B cell (primary cell): ENCODE measurements at regions of chr17 and their contacts with region 1.

Region 1: DNA sequence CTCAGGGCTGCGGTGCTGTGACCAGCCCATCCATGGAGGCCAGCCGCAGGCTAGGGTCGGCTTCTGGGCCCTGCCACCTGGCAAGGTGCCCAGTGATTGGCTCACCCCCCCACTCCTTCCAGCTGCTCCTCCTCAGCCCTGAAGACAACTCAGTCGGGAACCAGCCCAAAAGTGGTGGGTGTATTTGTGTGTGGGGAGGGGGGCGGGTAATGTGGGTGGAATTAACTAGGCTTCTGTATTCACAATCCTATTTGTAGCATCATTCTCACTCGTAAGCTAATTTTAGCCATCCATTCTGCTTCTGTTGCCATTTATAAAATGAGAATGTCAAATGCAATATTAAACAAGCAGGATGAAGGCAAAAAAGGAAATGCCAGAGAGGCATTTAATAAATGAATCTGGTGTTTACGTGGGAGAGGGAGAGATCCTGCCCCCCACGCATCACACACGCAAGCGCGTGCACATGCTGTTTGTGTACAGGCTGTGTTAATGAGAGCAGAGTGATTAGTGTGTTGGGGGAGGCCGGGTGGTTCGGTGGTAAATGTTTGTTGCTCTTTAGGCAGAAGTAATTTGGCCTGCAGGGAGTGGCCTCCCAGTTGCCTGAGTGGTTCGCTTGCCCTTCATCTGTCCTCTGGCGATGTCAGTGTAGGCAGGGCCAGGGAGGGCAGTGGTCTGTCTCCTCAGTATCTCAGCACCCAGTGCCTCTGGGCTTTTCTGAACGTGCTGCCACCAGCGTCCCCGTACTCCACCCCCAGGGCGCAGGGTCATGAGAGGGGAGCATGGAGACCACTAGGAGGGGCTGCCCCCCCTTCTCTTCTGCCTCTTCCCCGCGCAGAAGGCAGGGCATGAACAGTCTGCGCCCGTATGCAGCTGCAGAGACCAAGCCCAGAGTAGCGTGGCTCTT is 140.1 kb downstream of the CCDC182 start:
- DNase-seq: peak; percentile 88
- ATAC-seq: peak; percentile 77
- H3K4me3 ChIP-seq: peak overlapping the region in 1 of 5 experiments; percentile 42
- H3K4me3 Mint-ChIP-seq: peak overlapping the region; percentile 79
- H3K27ac ChIP-seq: peak overlapping the region; percentile 73 to 78
- H3K27ac Mint-ChIP-seq: peak overlapping the region; percentile 96
- H3K4me1 ChIP-seq: peaks cover 44 to 60% of the 10 kb centered on the region in 2 donors
- H3K4me1 Mint-ChIP-seq: peaks cover 62% of the 10 kb centered on the region
- H3K27me3 ChIP-seq: no peaks in the 10 kb centered on the region
- H3K27me3 Mint-ChIP-seq: no peaks in the 10 kb centered on the region
- CTCF ChIP-seq: peak; percentile 41

Region 2: GRCh38 chr17:57584050-57584551 is 20.9 kb before region 1 on chr17:
- CTCF ChIA-PET with region 1: no interaction called
- POLR2A ChIA-PET with region 1: no interaction called
- intact Hi-C with region 1: no loop called
- DNase-seq: no peak
- ATAC-seq: no peak
- H3K4me3 ChIP-seq: no peak overlapping the region
- H3K4me3 Mint-ChIP-seq: no peak overlapping the region
- H3K27ac ChIP-seq: no peak overlapping the region
- H3K27ac Mint-ChIP-seq: no peak overlapping the region
- H3K4me1 ChIP-seq: no peaks in the 10 kb centered on the region
- H3K4me1 Mint-ChIP-seq: no peaks in the 10 kb centered on the region
- H3K27me3 ChIP-seq: no peaks in the 10 kb centered on the region
- H3K27me3 Mint-ChIP-seq: no peaks in the 10 kb centered on the region
- CTCF ChIP-seq: no peak

Region 3: GRCh38 chr17:57622683-57623433 is 17.8 kb after region 1 on chr17:
- CTCF ChIA-PET with region 1: interaction called, 40 read pairs
- POLR2A ChIA-PET with region 1: interaction called, 6 read pairs
- intact Hi-C with region 1: loop called (anchors 1 kb)
- DNase-seq: peak; percentile 73
- ATAC-seq: peak; percentile 78
- H3K4me3 ChIP-seq: peak overlapping the region in 4 of 5 experiments; percentile 32 to 64 (median 49)
- H3K4me3 Mint-ChIP-seq: peak overlapping the region; percentile 81
- H3K27ac ChIP-seq: peak overlapping the region; percentile 59 to 73
- H3K27ac Mint-ChIP-seq: peak overlapping the region; percentile 85
- H3K4me1 ChIP-seq: peaks cover 34 to 42% of the 10 kb centered on the region in 2 donors
- H3K4me1 Mint-ChIP-seq: peaks cover 45% of the 10 kb centered on the region
- H3K27me3 ChIP-seq: no peaks in the 10 kb centered on the region
- H3K27me3 Mint-ChIP-seq: no peaks in the 10 kb centered on the region
- CTCF ChIP-seq: no peak

Region 4: GRCh38 chr17:57629470-57629869 is 24.4 kb after region 1 on chr17:
- CTCF ChIA-PET with region 1: interaction called, 40 read pairs
- POLR2A ChIA-PET with region 1: interaction called, 5 read pairs
- intact Hi-C with region 1: loop called (anchors 1 kb)
- DNase-seq: peak; percentile 84
- ATAC-seq: peak; percentile 88
- H3K4me3 ChIP-seq: no peak overlapping the region
- H3K4me3 Mint-ChIP-seq: peak overlapping the region; percentile 71
- H3K27ac ChIP-seq: peak overlapping the region; percentile 63 to 66
- H3K27ac Mint-ChIP-seq: peak overlapping the region; percentile 92
- H3K4me1 ChIP-seq: peaks cover 37 to 52% of the 10 kb centered on the region in 2 donors
- H3K4me1 Mint-ChIP-seq: peaks cover 50% of the 10 kb centered on the region
- H3K27me3 ChIP-seq: no peaks in the 10 kb centered on the region
- H3K27me3 Mint-ChIP-seq: no peaks in the 10 kb centered on the region
- CTCF ChIP-seq: no peak

Region 5: DNA sequence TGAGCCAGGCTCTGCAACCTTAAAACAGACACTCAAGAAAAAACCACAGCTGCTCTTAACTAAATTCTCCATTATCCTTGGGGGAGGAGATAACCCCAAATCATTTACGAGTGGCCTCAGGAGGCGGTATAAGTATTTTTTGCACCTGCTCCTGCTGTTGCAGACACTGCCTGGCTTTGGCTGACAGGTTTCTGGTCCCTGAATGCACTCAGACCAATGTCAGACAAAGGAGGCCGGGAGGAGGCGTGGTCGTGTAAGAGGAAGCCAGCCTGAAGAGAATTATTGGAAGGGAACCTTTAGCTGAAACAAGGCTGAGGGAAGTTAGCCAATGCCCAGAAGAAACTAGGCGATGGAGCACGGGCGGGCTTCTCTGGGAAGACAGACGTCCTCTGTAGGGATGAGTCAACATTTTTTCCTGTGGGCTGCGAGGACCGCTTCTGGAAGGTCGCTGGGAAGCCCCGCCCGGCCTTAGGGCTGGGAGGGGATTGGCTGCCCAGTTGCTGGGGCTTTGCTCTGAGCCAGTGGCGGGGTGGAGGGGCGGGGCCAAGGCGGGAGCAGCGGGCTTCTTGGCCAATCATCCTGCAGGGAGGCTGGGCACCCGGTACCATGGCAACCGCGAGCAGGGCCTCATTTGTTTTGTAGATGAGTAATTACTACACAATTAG is 57.8 kb after region 1 on chr17:
- CTCF ChIA-PET with region 1: interaction called, 12 read pairs
- POLR2A ChIA-PET with region 1: no interaction called
- intact Hi-C with region 1: no loop called
- DNase-seq: peak; percentile 57
- ATAC-seq: peak; percentile 76
- H3K4me3 ChIP-seq: no peak overlapping the region
- H3K4me3 Mint-ChIP-seq: peak overlapping the region; percentile 72
- H3K27ac ChIP-seq: no peak overlapping the region
- H3K27ac Mint-ChIP-seq: peak overlapping the region; percentile 85
- H3K4me1 ChIP-seq: peaks cover 24 to 37% of the 10 kb centered on the region in 2 donors
- H3K4me1 Mint-ChIP-seq: peaks cover 35% of the 10 kb centered on the region
- H3K27me3 ChIP-seq: no peaks in the 10 kb centered on the region
- H3K27me3 Mint-ChIP-seq: no peaks in the 10 kb centered on the region
- CTCF ChIP-seq: no peak

Region 6: GRCh38 chr17:57739402-57740392 is 134.7 kb after region 1 on chr17:
- CTCF ChIA-PET with region 1: interaction called, 4 read pairs
- POLR2A ChIA-PET with region 1: no interaction called
- intact Hi-C with region 1: loop called (anchors 5 kb)
- DNase-seq: peak; percentile 49
- ATAC-seq: no peak
- H3K4me3 ChIP-seq: no peak overlapping the region
- H3K4me3 Mint-ChIP-seq: no peak overlapping the region
- H3K27ac ChIP-seq: no peak overlapping the region
- H3K27ac Mint-ChIP-seq: no peak overlapping the region
- H3K4me1 ChIP-seq: peaks cover 19 to 24% of the 10 kb centered on the region in 2 donors
- H3K4me1 Mint-ChIP-seq: peaks cover 20% of the 10 kb centered on the region
- H3K27me3 ChIP-seq: no peaks in the 10 kb centered on the region
- H3K27me3 Mint-ChIP-seq: peaks cover 3% of the 10 kb centered on the region
- CTCF ChIP-seq: peak; percentile 27